ENCODE measurements at regions of chr5 and their contacts with region 1.

Region 1: GRCh38 chr5:71601222-71602041 is 14.3 kb downstream of the MCCC2 start:
- DNase-seq: peak; percentile 95
- ATAC-seq: peak; percentile 96
- H3K4me3 ChIP-seq: peak overlapping the region; percentile 39; the same call in 1 of the 2 replicates
- H3K27ac ChIP-seq: peak overlapping the region; percentile 90
- H3K4me1 ChIP-seq: peaks cover 27% of the 10 kb centered on the region
- H3K27me3 ChIP-seq: no peaks in the 10 kb centered on the region
- CTCF ChIP-seq: peak; percentile 73

Region 2: DNA sequence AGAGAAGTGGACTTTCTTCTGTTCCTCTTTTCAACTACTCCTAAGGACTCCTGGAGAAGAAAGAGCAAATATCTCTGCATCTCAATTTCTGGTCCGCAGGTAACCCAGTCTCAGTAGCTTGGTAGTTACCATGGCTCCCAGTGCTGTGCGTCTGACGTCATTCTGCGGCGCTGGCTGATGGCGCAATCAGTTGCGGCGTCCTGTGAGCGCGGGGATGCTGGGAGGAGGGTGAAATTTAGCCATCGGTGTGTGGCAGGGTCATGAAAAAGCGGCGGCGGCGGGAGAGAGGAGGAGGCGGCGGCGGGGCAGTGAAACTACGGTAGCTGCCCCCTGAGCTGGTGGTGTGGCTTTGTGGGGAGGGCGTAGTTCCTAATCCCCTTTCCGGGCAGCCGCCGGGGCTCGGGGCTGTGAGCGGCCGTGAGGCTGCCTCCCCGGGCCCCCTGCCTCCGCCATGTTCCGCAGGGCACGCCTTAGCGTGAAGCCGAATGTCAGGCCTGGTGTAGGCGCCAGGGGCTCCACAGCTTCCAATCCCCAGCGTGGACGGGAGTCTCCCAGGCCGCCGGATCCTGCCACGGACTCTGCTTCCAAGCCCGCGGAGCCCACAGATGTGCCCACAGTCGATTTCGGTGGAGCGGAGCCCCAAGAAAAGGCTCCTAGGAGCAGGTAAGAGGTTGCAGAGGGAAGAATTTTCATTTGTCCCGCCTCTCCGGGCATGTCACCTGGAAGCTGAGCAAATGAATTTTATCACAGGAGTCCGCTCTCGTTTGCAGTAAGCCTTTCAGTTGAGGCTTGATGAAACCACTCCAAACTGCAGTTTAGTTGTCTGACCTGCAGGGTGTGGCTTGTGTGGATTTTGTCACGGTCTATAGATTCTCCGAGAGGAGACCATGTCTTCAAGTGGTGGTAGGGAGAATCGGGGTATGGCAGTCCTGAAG is 145.7 kb before region 1 on chr5 and contains the start of gene BDP1:
- CTCF ChIA-PET with region 1: no interaction called
- POLR2A ChIA-PET with region 1: no interaction called
- intact Hi-C with region 1: loop called (anchors 1 kb)
- DNase-seq: peak; percentile 94
- ATAC-seq: peak; percentile 86
- H3K4me3 ChIP-seq: peak within 1 kb of the TSS; percentile 100
- H3K27ac ChIP-seq: peak within 1 kb of the TSS; percentile 75
- H3K4me1 ChIP-seq: peaks cover 11% of the 10 kb centered on the region; the same call in 1 of the 2 replicates
- H3K27me3 ChIP-seq: 0 out of 2 replicates have a peak, but pooled peaks cover under 1% of the 10 kb centered on the region
- CTCF ChIP-seq: 0 out of 2 replicates have a peak, but pooled peaks have one; percentile 27
- total RNA-seq, gene BDP1: 17.9 and 18.4 TPM in 2 replicates

Region 3: GRCh38 chr5:71586941-71587765 is 14.3 kb before region 1 on chr5 and contains the start of gene MCCC2:
- CTCF ChIA-PET with region 1: interaction called, 13 read pairs
- POLR2A ChIA-PET with region 1: interaction called, 4 read pairs
- intact Hi-C with region 1: loop called (anchors 2 kb)
- DNase-seq: peak; percentile 91
- ATAC-seq: peak; percentile 99
- H3K4me3 ChIP-seq: peak within 1 kb of the TSS; percentile 81
- H3K27ac ChIP-seq: peak within 1 kb of the TSS; percentile 72
- H3K4me1 ChIP-seq: peaks cover 20% of the 10 kb centered on the region
- H3K27me3 ChIP-seq: no peaks in the 10 kb centered on the region
- CTCF ChIP-seq: no peak
- total RNA-seq, gene MCCC2: 31.7 and 32.2 TPM in 2 replicates

Region 4: GRCh38 chr5:71637133-71637532 is 35.7 kb after region 1 on chr5:
- CTCF ChIA-PET with region 1: interaction called, 4 read pairs
- POLR2A ChIA-PET with region 1: no interaction called
- intact Hi-C with region 1: loop called (anchors 2 kb)
- DNase-seq: no peak
- ATAC-seq: peak; percentile 81
- H3K4me3 ChIP-seq: no peak overlapping the region
- H3K27ac ChIP-seq: no peak overlapping the region
- H3K4me1 ChIP-seq: no peaks in the 10 kb centered on the region
- H3K27me3 ChIP-seq: no peaks in the 10 kb centered on the region
- CTCF ChIP-seq: no peak

Region 5: GRCh38 chr5:71727978-71728377 is 126.5 kb after region 1 on chr5:
- CTCF ChIA-PET with region 1: no interaction called
- POLR2A ChIA-PET with region 1: no interaction called
- intact Hi-C with region 1: no loop called
- DNase-seq: no peak
- ATAC-seq: no peak
- H3K4me3 ChIP-seq: no peak overlapping the region
- H3K27ac ChIP-seq: no peak overlapping the region
- H3K4me1 ChIP-seq: no peaks in the 10 kb centered on the region
- H3K27me3 ChIP-seq: peaks cover 33% of the 10 kb centered on the region
- CTCF ChIP-seq: no peak

Region 6: DNA sequence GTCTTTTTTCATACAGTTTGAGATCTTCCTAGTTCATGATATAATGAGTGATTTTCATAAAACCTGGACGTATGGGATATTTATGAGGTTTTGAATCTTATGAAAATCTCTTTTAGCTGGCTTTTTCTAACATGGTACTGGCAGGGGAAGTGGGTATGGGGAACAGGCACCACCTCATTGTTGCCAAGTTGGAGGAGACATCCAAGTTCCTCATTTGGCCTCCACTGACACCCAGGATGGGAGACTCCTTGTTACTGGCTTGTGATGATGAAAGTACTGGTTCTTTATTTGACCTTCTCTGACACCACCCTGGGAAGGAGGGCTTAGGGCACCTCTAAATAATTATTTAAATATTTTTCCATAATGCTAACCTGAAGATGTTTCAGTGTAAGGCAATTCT is 1211.1 kb after region 1 on chr5:
- CTCF ChIA-PET with region 1: no interaction called
- POLR2A ChIA-PET with region 1: no interaction called
- intact Hi-C with region 1: no loop called
- DNase-seq: no peak
- ATAC-seq: no peak
- H3K4me3 ChIP-seq: no peak overlapping the region
- H3K27ac ChIP-seq: no peak overlapping the region
- H3K4me1 ChIP-seq: peaks cover 9% of the 10 kb centered on the region; the same call in 1 of the 2 replicates
- H3K27me3 ChIP-seq: no peaks in the 10 kb centered on the region
- CTCF ChIP-seq: no peak